Activated B cell treated with CpG ODN at 0.5 μM for 24 hours (primary cell): ENCODE measurements at regions of chr10 and their contacts with region 1.

Region 1: DNA sequence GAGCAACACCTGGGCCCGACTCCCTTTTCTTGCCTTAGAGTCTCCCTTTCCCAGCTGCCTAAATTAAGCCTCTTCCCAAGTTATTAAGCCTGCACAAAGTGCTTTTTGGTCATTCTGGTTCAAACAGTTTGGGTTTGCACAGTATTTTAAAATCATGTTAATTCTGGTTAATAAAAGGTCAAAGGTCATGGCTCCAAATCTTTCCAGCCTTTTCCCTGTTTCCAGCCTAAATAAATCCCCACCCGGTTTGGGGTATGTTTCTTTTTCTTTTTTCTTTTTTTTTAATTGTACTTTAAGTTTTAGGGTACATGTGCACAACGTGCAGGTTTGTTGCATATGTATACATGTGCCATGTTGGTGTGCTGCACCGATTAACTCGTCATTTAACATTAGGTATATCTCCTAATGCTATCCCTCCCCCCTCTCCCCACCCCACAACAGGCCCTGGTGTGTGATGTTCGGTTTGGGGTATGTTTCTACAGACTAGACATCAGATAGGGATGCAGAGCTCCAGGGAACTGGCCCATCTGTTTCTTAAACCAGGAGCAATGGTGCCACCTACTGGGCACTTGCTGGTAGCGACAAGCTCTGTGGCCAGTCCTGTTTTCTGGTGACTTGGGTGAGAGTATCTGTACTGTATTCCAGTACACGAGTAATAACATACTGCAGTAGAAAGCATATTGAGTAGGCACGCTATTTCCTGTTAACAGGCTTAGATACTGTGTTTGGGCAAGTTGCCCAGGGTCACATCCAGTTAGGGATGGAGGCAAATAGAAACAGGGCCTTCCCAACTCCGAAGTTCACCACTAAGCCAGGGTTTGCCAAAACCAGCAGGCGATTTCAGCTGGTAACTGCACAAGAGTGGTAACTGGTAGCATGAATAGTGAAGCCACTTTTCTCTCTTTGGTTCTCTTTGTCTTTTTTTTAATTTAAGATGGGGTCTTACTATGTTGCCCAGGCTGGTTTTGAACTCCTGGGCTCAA is 60.6 kb upstream of the TRIM8 start:
- DNase-seq: peak; percentile 59
- ATAC-seq: peak; percentile 98
- H3K4me3 Mint-ChIP-seq: no peak overlapping the region
- H3K27ac Mint-ChIP-seq: no peak overlapping the region
- H3K4me1 Mint-ChIP-seq: no peaks in the 10 kb centered on the region
- H3K27me3 Mint-ChIP-seq: no peaks in the 10 kb centered on the region
- CTCF ChIP-seq: peak; percentile 64

Region 2: GRCh38 chr10:102225646-102226541 is 357.8 kb before region 1 on chr10 and contains the start of gene ELOVL3:
- CTCF ChIA-PET with region 1: interaction called, 55 read pairs
- POLR2A ChIA-PET with region 1: interaction called, 3 read pairs
- intact Hi-C with region 1: loop called (anchors 1 kb)
- DNase-seq: peak; percentile 69
- ATAC-seq: peak; percentile 94
- H3K4me3 Mint-ChIP-seq: peak within 1 kb of the TSS; percentile 71
- H3K27ac Mint-ChIP-seq: no peak within 1 kb of the TSS
- H3K4me1 Mint-ChIP-seq: peaks cover 19% of the 10 kb centered on the region
- H3K27me3 Mint-ChIP-seq: peaks cover 59% of the 10 kb centered on the region
- CTCF ChIP-seq: no peak
- total RNA-seq, gene ELOVL3: not detected in 2 replicates

Region 3: DNA sequence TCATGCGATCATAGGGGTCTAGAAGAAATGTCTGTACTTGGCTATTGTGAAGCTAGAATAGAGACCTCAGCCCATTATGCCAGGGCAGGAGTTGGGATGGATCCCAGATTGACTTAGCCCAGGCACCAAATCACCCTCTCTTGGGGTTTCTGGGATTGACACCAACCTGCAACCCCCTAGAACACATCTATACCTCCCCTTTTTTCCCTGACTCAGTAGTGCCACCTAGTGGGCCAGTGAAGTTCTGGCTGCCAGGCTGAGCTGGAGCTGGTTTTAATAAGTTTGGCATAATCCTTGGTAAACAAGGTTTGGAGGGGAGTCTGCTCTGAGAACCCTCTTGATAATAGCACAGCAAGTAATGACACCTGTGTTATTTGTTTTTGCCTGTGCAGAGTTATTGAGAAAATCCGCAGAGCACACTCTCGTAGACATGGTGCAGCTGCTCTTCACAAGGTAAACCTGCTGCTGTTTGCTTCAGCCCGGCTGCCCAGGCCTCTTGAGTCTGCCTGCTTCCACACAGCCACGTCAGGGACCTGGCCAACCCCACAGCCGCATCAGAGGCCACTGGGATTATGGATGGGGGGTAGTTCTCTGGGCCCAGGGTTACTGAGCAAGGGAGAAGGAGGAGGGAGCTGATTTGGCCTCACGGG is 231.5 kb before region 1 on chr10:
- CTCF ChIA-PET with region 1: interaction called, 15 read pairs
- POLR2A ChIA-PET with region 1: no interaction called
- intact Hi-C with region 1: loop called (anchors 1 kb)
- DNase-seq: peak; percentile 45
- ATAC-seq: peak; percentile 70
- H3K4me3 Mint-ChIP-seq: no peak overlapping the region
- H3K27ac Mint-ChIP-seq: no peak overlapping the region
- H3K4me1 Mint-ChIP-seq: no peaks in the 10 kb centered on the region
- H3K27me3 Mint-ChIP-seq: no peaks in the 10 kb centered on the region
- CTCF ChIP-seq: peak; percentile 81

Region 4: DNA sequence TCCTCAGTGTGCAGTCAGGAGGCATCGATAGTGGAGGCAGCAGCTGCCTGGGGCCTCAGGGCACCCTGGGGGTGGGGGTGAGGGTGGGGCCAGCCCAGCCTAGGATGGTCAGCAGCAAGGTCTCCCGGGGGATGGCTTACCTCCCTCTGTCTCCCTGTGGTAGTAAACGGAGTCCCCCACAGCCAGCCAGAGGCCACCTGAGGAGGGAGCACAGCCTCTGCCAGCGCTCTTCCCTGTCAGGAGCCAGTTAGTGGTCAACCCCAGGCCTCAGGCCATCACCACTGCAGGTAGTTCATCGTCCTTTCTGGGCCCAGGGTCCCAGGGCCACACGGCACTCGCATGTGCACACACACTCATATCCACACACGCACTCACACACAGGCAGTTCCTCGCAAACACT is 103.3 kb before region 1 on chr10:
- CTCF ChIA-PET with region 1: interaction called, 33 read pairs
- POLR2A ChIA-PET with region 1: interaction called, 6 read pairs
- intact Hi-C with region 1: loop called (anchors 1 kb)
- DNase-seq: no peak
- ATAC-seq: no peak
- H3K4me3 Mint-ChIP-seq: no peak overlapping the region
- H3K27ac Mint-ChIP-seq: no peak overlapping the region
- H3K4me1 Mint-ChIP-seq: peaks cover 7% of the 10 kb centered on the region
- H3K27me3 Mint-ChIP-seq: no peaks in the 10 kb centered on the region
- CTCF ChIP-seq: no peak

Region 5: GRCh38 chr10:102596506-102596971 is 12.8 kb after region 1 on chr10:
- CTCF ChIA-PET with region 1: interaction called, 21 read pairs
- POLR2A ChIA-PET with region 1: no interaction called
- intact Hi-C with region 1: no loop called
- DNase-seq: no peak
- ATAC-seq: peak; percentile 61
- H3K4me3 Mint-ChIP-seq: no peak overlapping the region
- H3K27ac Mint-ChIP-seq: no peak overlapping the region
- H3K4me1 Mint-ChIP-seq: no peaks in the 10 kb centered on the region
- H3K27me3 Mint-ChIP-seq: no peaks in the 10 kb centered on the region
- CTCF ChIP-seq: no peak

Region 6: GRCh38 chr10:102796407-102797176 is 212.9 kb after region 1 on chr10:
- CTCF ChIA-PET with region 1: no interaction called
- POLR2A ChIA-PET with region 1: no interaction called
- intact Hi-C with region 1: no loop called
- DNase-seq: peak; percentile 51
- ATAC-seq: peak; percentile 99
- H3K4me3 Mint-ChIP-seq: peak overlapping the region; percentile 68
- H3K27ac Mint-ChIP-seq: peak overlapping the region; percentile 88
- H3K4me1 Mint-ChIP-seq: peaks cover 47% of the 10 kb centered on the region
- H3K27me3 Mint-ChIP-seq: no peaks in the 10 kb centered on the region
- CTCF ChIP-seq: no peak

Region 7: GRCh38 chr10:102962951-102963755 is 379.4 kb after region 1 on chr10:
- CTCF ChIA-PET with region 1: no interaction called
- POLR2A ChIA-PET with region 1: no interaction called
- intact Hi-C with region 1: no loop called
- DNase-seq: no peak
- ATAC-seq: no peak
- H3K4me3 Mint-ChIP-seq: no peak overlapping the region
- H3K27ac Mint-ChIP-seq: no peak overlapping the region
- H3K4me1 Mint-ChIP-seq: no peaks in the 10 kb centered on the region
- H3K27me3 Mint-ChIP-seq: no peaks in the 10 kb centered on the region
- CTCF ChIP-seq: no peak